Left lung (tissue), 14 donors: ENCODE measurements at regions of chr13 and their contacts with region 1.

Region 1: DNA sequence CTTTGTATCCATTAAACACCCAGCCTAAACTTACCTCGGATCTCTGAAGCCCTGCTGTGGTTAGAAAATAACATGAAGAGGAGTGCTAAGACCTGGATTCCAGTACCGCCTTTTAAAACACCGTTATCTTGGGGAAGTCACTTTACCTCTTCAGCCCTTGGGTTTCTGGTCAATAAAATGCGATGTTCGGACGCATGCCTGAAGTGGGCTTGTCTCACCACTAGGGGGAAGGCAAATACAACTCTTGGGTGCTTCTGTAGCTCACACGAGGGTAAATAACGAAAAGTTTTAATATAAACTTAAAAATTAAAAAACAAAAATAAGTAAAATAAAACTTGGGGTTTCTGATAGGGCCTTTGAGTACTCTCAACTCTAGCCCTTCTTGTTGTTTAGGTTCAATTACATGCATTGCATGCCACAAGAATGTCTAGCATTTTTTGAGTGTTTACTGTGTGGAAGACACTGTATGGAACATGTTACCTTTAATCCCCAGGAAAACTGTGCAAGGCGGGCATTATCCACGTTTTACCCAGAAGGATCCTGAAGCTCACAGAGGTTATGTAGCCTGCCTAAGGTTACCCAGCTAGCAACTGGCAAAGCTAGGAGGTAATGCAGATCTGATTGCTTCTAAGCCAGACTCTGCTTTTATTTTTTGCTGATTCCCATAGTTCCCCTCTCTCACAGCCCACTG is 240.4 kb downstream of the LMO7 start:
- DNase-seq: peak in 2 of 4 donors; percentile 54 to 73
- ATAC-seq: peak; percentile 92
- H3K4me3 ChIP-seq: no peak overlapping the region
- H3K27ac ChIP-seq: no peak overlapping the region
- H3K4me1 ChIP-seq: no peaks in the 10 kb centered on the region
- H3K27me3 ChIP-seq: no peaks in the 10 kb centered on the region
- CTCF ChIP-seq: peak; percentile 82 to 94

Region 2: DNA sequence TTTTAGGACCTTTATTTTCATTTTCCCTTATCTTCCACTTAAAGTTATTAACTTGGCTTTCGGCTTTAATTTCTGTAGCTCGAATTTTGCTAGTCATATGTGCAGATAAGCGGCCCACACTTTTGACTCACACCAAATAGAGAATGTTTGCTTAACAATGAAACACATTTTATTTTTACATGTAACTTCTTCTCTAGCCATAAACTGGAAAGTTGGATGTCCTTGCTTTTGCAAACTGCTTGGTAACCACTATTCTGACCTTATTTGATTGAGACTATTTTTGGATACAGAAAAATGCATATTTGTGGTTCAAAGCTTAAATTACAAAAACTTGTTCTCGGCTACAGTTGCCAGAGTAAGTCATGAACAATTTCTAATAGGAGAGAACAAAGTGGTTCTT is 409.7 kb after region 1 on chr13:
- intact Hi-C with region 1: loop called in 1 of 2 experiments (anchors 5 kb)
- DNase-seq: no peak
- ATAC-seq: peak; percentile 82
- H3K4me3 ChIP-seq: no peak overlapping the region
- H3K27ac ChIP-seq: peak overlapping the region in 1 of 2 donors; percentile 72
- H3K4me1 ChIP-seq: no peaks in the 10 kb centered on the region
- H3K27me3 ChIP-seq: no peaks in the 10 kb centered on the region
- CTCF ChIP-seq: no peak

Region 3: DNA sequence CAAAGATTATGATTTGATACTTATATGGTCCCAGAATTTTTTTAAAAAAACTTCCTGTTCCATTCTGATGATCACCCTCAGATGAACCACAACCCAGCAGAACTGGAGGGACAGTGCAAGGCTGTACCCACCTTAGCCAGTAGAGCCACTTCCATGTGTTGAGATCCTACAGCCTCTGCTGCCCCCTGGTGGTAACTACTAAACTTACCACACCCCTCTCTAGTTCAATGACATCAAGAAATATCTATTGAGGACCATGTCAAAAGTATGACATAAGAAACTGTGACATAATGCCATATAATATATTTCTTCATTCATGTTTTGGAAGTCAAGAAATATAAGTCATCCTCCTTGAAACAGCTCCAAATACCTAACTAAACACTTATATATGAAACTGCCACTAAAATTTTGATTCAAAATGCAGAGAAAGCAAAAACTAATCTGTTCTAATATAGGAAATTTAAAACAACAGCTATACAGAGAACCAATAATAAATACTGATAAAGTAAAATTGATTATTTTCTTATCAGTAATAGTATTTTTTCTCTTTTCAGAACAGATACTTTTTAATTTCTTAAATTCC is 597.1 kb after region 1 on chr13:
- intact Hi-C with region 1: loop called in 1 of 2 experiments (anchors 5 kb)
- DNase-seq: peak in 3 of 4 donors; percentile 62 to 82 (median 64)
- ATAC-seq: peak; percentile 99
- H3K4me3 ChIP-seq: no peak overlapping the region
- H3K27ac ChIP-seq: no peak overlapping the region
- H3K4me1 ChIP-seq: peaks cover 0 to 6% of the 10 kb centered on the region in 2 donors
- H3K27me3 ChIP-seq: no peaks in the 10 kb centered on the region
- CTCF ChIP-seq: peak; percentile 72 to 88

Region 4: DNA sequence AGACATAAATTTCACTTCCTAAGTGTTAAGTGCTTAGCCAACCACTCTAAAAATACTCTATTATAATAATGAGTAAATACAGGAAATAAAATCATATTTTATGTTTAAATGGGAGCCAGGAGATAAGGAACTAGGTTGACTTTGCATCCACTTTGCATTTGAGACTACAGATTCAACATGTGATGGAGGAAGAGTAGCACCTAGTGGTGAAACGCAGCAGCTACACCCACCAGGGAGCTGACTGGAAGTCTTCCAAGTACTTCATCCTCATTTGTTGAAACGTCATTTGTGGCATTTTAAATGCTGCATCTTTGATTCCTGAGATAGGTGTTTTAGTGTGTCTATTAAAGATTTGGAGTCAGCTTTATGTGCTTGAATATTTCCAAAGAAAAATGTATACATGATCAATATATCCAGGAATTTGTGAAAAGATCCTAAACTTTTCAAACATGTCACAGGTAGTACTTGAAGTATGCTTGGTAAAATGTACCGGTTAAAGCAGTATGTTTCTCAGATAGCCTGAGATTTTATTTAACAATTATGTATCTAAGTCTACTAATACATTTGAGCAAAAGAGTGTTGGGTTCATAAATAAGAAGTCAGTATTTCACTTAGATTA is 1027.1 kb after region 1 on chr13:
- intact Hi-C with region 1: loop called in 1 of 2 experiments (anchors 10 kb)
- DNase-seq: peak in 2 of 4 donors; percentile 62 to 79
- ATAC-seq: peak; percentile 99
- H3K4me3 ChIP-seq: no peak overlapping the region
- H3K27ac ChIP-seq: no peak overlapping the region
- H3K4me1 ChIP-seq: peaks cover 2 to 7% of the 10 kb centered on the region in 2 donors
- H3K27me3 ChIP-seq: no peaks in the 10 kb centered on the region
- CTCF ChIP-seq: peak; percentile 98 to 99